ENCODE measurements at regions of chr10 and their contacts with region 1.

Region 1: DNA sequence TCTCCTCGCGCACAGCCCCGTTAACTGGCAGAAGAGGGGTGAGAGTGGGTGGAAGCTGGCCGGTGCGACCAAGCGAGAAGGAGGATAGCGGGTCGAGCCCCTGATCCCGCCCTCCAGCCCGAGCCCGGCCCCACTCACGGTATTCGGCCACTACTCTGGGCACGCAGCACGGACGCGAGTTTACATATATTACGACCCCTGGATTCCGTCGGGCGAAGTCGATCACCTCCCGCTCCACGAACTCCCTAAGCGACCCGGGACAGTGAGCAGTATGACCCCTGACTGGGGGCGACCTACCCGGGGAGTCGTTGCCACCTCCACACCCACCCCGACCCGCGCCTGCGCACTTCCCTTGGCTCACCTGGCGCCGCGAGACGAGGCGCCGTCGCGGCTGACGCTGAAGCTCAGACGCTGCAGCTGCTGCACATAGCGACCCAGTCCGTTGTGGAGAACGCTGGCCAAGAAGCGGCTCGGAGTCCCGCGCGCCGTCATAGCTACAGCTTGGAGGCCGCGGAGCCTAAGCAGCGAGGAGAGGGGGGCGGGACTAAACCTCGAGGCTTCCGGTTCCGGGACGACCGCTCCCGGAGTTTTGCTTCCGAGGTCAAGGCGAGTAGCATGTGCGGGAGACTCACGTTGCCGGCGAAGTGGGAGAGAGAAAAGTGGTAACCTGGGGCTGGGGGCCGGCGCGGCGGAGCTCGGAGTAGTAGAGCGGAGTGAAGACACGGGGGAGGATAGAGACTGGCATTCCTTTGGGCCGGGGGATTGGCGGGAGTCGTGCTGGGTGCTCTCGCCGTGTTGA is at the starts of genes MRPL43 and TWNK:
- DNase-seq: peak; percentile 67 to 90 (median 82)
- ATAC-seq: peak; percentile 94 to 97 (median 96)
- H3K4me3 ChIP-seq: peak within 1 kb of the TSS; percentile 91 to 92
- H3K4me3 Mint-ChIP-seq: peak within 1 kb of the TSS; percentile 89 to 99 (median 93)
- H3K27ac ChIP-seq: peak within 1 kb of the TSS; percentile 20
- H3K27ac Mint-ChIP-seq: peak within 1 kb of the TSS; percentile 86 to 96
- H3K4me1 ChIP-seq: peaks cover 7 to 39% of the 10 kb centered on the region in 2 experiments
- H3K4me1 Mint-ChIP-seq: peaks cover 38 to 50% (median 44%) of the 10 kb centered on the region in 3 donors
- H3K27me3 ChIP-seq: no peaks in the 10 kb centered on the region
- H3K27me3 Mint-ChIP-seq: no peaks in the 10 kb centered on the region
- total RNA-seq, gene MRPL43: 36.2 to 67.6 (median 60.4) TPM
- total RNA-seq, gene TWNK: 5.3 to 20.2 (median 16.9) TPM

Region 2: GRCh38 chr10:100934084-100934659 is 53.0 kb before region 1 on chr10:
- CTCF ChIA-PET with region 1: no interaction called
- POLR2A ChIA-PET with region 1: no interaction called
- DNase-seq: peak in 1 of 35 experiments; percentile 31
- ATAC-seq: no peak
- H3K4me3 ChIP-seq: no peak overlapping the region
- H3K4me3 Mint-ChIP-seq: no peak overlapping the region
- H3K27ac ChIP-seq: no peak overlapping the region
- H3K27ac Mint-ChIP-seq: no peak overlapping the region
- H3K4me1 ChIP-seq: no peaks in the 10 kb centered on the region
- H3K4me1 Mint-ChIP-seq: peaks cover 0 to 4% (median 0%) of the 10 kb centered on the region in 3 donors
- H3K27me3 ChIP-seq: no peaks in the 10 kb centered on the region
- H3K27me3 Mint-ChIP-seq: no peaks in the 10 kb centered on the region

Region 3: DNA sequence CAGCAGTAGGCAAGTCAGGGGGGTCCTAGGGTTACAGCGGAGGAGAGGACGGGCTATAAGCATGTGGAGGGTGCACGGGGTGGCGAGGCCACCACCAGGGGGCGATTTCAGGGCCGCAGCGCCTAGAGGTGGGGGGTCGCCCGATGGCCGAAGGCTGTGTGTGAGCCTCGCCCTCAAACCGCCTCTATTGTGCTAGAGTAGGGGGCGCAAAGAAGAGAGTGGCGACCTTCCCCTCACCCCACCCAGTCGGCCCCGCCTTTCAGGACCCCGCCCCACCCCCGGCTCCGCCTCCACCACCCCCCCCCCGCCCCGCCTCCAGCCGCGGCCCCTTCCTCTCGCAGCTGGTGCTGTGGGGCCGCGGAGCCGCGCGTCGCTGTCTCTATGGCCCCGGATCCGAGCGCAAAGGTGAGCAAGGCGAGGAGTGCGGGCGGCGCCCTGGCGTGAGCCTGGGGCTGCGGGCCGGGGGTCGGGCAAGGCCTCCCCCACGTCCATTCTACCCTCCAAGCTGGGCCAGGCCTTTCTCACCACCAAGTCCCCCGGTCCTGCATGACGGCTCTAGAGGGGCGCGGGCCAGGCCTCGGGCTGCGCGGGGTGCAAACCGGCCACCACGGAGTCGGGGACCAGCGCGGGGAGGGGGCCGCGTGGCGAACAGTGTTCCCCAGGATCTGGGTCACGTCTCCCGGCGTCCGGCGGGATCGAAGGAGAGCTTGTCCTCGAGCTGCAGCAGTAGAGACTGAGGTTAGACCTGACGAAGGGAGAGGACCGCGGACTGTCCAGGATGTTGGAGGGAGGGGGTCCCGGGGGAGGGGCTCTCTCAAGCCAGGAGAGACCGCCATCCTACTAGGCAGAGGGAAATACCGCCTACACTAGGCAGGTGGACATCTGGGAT is 17.7 kb before region 1 on chr10 and contains the start of gene SEMA4G:
- CTCF ChIA-PET with region 1: no interaction called
- POLR2A ChIA-PET with region 1: no interaction called
- DNase-seq: peak in 31 of 35 experiments; percentile 7 to 64 (median 32)
- ATAC-seq: peak; percentile 73 to 81 (median 79)
- H3K4me3 ChIP-seq: peak within 1 kb of the TSS; percentile 39 to 67
- H3K4me3 Mint-ChIP-seq: peak within 1 kb of the TSS; percentile 57 to 74 (median 58)
- H3K27ac ChIP-seq: no peak within 1 kb of the TSS
- H3K27ac Mint-ChIP-seq: no peak within 1 kb of the TSS
- H3K4me1 ChIP-seq: peaks cover 3 to 14% of the 10 kb centered on the region in 2 experiments
- H3K4me1 Mint-ChIP-seq: peaks cover 8 to 18% (median 12%) of the 10 kb centered on the region in 3 donors
- H3K27me3 ChIP-seq: peaks cover 0 to 11% of the 10 kb centered on the region in 2 experiments
- H3K27me3 Mint-ChIP-seq: peaks cover 0 to 4% of the 10 kb centered on the region in 2 donors
- total RNA-seq, gene SEMA4G: 1.1 to 2.8 (median 1.4) TPM

Region 4: DNA sequence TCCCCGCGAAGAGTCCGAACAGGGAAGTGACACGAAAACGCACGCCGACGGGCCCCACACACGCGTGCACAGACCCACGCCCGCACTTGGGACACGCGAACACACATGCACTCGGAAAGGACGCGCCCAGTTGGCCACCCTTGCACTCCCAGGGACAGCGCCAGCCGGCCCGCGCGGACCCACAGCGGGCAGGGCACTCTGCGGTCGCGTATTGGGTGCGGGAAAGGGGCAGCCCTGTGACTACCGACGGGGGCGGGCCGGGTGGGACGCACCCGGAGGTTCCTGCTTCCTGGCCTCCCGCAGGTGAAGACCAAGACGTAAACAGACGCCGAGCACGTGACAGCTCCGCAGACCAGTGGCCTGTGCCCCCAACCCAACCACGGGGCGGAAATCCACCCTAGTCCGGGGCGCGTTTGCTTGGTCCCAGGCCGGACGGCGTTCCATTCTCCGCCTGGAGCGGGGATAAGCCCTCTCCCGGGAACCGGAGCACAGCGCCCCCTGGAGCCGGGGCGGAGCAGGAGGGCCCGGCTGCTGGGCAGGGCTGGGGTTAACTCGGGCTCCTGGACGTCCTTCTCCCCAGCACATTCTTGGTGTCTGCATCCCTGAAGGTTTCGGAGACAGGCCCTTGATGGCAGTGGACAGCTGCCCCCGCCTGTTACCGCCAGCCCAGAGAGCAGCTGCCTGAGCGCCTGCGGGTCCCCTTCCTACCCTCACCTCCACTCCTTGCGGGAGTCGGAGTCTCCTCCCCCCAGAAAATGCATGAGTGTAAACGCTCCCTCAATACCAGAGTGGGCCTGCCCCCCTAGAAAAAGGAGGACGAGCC is 10.4 kb after region 1 on chr10:
- CTCF ChIA-PET with region 1: interaction called, 4 to 11 read pairs
- POLR2A ChIA-PET with region 1: interaction called in 1 of 2 experiments, 5 read pairs
- DNase-seq: peak in 34 of 35 experiments; percentile 27 to 79 (median 51)
- ATAC-seq: peak; percentile 45 to 56 (median 54)
- H3K4me3 ChIP-seq: peak overlapping the region; percentile 91 to 96
- H3K4me3 Mint-ChIP-seq: peak overlapping the region; percentile 78 to 95 (median 92)
- H3K27ac ChIP-seq: peak overlapping the region; percentile 74
- H3K27ac Mint-ChIP-seq: peak overlapping the region; percentile 95 to 97
- H3K4me1 ChIP-seq: peaks cover 12 to 38% of the 10 kb centered on the region in 2 experiments
- H3K4me1 Mint-ChIP-seq: peaks cover 24 to 32% (median 30%) of the 10 kb centered on the region in 3 donors
- H3K27me3 ChIP-seq: no peaks in the 10 kb centered on the region
- H3K27me3 Mint-ChIP-seq: no peaks in the 10 kb centered on the region

Region 5: DNA sequence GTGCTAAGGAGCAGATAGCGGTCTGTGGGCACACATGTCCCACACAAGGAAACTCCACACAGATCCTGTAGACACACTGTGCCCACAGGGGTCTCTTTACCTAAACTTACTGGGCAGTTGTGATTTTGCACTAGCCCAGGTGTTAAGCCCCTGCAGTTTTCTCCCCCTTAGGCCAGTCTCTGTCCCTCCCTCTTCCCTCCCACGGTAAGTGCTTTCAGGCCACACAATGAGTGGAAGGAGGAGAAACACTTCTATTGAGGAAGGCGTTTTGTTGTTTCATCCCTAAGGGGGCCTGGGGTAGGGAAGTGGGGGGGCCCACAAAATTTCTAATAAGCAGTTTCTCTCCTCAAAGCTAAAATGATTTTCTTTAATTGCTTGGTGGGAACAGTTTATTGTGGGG is 656.4 kb after region 1 on chr10:
- CTCF ChIA-PET with region 1: no interaction called
- POLR2A ChIA-PET with region 1: interaction called in 1 of 2 experiments, 10 read pairs
- DNase-seq: no peak
- ATAC-seq: no peak
- H3K4me3 ChIP-seq: no peak overlapping the region
- H3K4me3 Mint-ChIP-seq: no peak overlapping the region
- H3K27ac ChIP-seq: no peak overlapping the region
- H3K27ac Mint-ChIP-seq: no peak overlapping the region
- H3K4me1 ChIP-seq: peaks cover 0 to 4% of the 10 kb centered on the region in 2 experiments
- H3K4me1 Mint-ChIP-seq: peaks cover 15 to 23% (median 17%) of the 10 kb centered on the region in 3 donors
- H3K27me3 ChIP-seq: no peaks in the 10 kb centered on the region
- H3K27me3 Mint-ChIP-seq: no peaks in the 10 kb centered on the region